Sciatic nerve (tissue), 2 donors: ENCODE measurements at regions of chr20 and their contacts with region 1.

Region 1: GRCh38 chr20:53915446-53916172 is 154.8 kb downstream of the BCAS1 start:
- DNase-seq: peak; percentile 99
- ATAC-seq: peak; percentile 95

Region 2: GRCh38 chr20:53578492-53579222 is 337.0 kb before region 1 on chr20:
- intact Hi-C with region 1: loop called (anchors 5 kb)
- DNase-seq: no peak
- ATAC-seq: peak; percentile 86

Region 3: DNA sequence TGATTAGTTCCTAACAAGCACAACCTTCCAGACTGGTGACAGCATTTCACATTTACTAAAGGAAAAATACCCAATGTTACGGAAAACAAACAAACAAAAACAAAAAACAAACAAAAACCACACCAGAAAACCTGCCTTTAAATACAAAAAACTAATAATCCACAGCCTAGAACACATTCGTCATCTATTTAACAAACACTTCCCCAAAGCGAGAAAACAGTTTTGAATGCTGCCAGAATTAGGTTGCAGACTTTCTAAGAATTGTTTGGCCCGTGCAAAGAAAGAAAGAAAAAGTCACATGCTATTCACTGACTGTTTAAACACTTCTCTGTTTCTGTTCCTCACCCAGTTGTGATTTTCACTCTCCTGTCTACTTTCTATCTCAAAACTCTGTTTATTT is 102.2 kb after region 1 on chr20:
- intact Hi-C with region 1: no loop called
- DNase-seq: no peak
- ATAC-seq: peak; percentile 71